CD4-positive, alpha-beta memory T cell (primary cell): ENCODE measurements at regions of chr12 and their contacts with region 1.

Region 1: GRCh38 chr12:22046090-22046967 is at the start of gene CMAS:
- DNase-seq: peak; percentile 63 to 81 (median 71)
- H3K4me3 ChIP-seq: peak within 1 kb of the TSS; percentile 87 to 91
- H3K4me3 Mint-ChIP-seq: peak within 1 kb of the TSS; percentile 90 to 98 (median 96)
- H3K27ac ChIP-seq: peak within 1 kb of the TSS; percentile 75
- H3K27ac Mint-ChIP-seq: peak within 1 kb of the TSS; percentile 85 to 95 (median 91)
- H3K4me1 ChIP-seq: peaks cover 35% of the 10 kb centered on the region
- H3K4me1 Mint-ChIP-seq: peaks cover 33 to 50% (median 39%) of the 10 kb centered on the region in 4 donors
- H3K27me3 ChIP-seq: no peaks in the 10 kb centered on the region
- H3K27me3 Mint-ChIP-seq: peaks cover 0 to 1% of the 10 kb centered on the region in 2 donors
- total RNA-seq, gene CMAS: 20.1 to 20.3 TPM

Region 2: DNA sequence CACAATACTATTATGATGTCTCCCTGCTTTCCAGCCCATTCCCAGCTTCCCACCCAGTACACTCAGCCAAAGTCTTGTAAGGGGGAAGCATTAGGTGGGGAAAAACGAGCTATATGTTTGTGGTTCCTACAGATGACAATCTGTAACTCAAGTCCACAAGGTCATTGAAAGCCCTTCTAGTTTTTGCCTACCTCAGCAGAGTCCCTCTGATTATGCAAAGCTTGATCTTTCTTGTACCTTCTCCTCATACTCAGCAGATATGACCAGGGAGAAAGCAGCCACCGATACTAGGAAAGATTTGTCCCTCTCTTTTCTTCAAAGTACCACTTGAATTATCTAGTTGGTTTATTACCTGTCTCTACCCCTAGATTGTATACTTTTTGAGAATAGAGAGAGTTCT is 10.3 kb after region 1 on chr12:
- CTCF ChIA-PET with region 1: interaction called, 4 read pairs
- POLR2A ChIA-PET with region 1: interaction called, 16 read pairs
- intact Hi-C with region 1: no loop called
- DNase-seq: no peak
- H3K4me3 ChIP-seq: no peak overlapping the region
- H3K4me3 Mint-ChIP-seq: no peak overlapping the region
- H3K27ac ChIP-seq: no peak overlapping the region
- H3K27ac Mint-ChIP-seq: peak overlapping the region in 1 of 7 donors; percentile 51
- H3K4me1 ChIP-seq: no peaks in the 10 kb centered on the region
- H3K4me1 Mint-ChIP-seq: peaks cover under 1 to 1% (median 1%) of the 10 kb centered on the region in 4 donors
- H3K27me3 ChIP-seq: no peaks in the 10 kb centered on the region
- H3K27me3 Mint-ChIP-seq: no peaks in the 10 kb centered on the region